WTC11 (cell line): ENCODE measurements at regions of chr14 and their contacts with region 1.

Region 1: GRCh38 chr14:77028384-77029231 is at the start of gene IRF2BPL:
- DNase-seq: peak; percentile 96
- ATAC-seq: peak; percentile 43
- H3K4me3 Mint-ChIP-seq: peak within 1 kb of the TSS; percentile 76
- H3K27ac Mint-ChIP-seq: peak within 1 kb of the TSS; percentile 98
- H3K4me1 Mint-ChIP-seq: peaks cover 52% of the 10 kb centered on the region
- H3K27me3 Mint-ChIP-seq: peaks cover 2% of the 10 kb centered on the region; the same call in 1 of the 2 replicates
- CTCF ChIP-seq: no peak
- total RNA-seq, gene IRF2BPL: 106 to 126 TPM (median 110 TPM) in 3 replicates

Region 2: DNA sequence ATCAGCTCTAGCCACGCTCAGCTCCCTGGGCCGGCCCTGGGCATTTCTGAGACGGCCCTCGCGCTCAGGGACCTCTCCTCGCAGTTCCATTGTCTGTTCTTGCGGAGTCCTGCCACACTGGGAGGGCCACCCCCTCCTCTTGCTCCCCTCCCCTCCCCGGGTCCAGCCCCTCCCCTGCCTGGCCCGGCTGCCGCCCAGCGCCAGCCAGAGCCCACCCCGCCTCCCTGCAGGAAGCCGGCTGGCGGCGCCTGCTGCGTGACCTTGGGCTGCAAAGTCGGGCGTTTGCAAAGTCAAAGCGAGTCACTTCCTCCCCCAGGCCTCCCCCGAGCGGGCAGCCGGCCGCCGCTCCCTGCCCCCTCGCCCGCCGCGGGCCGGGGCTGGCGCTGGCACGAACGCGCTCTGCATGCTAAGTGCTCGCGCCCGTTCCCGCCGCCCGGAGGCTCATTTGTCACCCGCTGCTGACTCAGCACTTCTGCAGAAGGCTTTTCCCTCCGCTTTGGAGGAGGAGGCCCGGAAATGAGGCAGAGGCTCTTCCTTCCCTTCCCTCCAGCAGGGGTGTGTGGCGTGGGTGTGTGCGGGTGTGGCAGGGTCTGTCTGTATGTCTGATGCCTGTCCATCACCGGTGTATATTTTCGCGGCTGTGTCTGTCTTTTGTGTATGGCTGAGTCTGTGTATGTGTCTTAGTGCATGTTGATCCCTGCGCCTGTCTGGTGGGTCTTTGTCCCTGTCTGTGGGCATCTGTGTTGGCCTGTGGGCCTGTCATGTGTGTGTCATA is 72.1 kb before region 1 on chr14:
- CTCF ChIA-PET with region 1: interaction called, 18 read pairs
- POLR2A ChIA-PET with region 1: interaction called, 45 read pairs
- DNase-seq: peak; percentile 92
- ATAC-seq: peak; percentile 71
- H3K4me3 Mint-ChIP-seq: peak overlapping the region; percentile 55
- H3K27ac Mint-ChIP-seq: peak overlapping the region; percentile 98
- H3K4me1 Mint-ChIP-seq: peaks cover 71% of the 10 kb centered on the region
- H3K27me3 Mint-ChIP-seq: no peaks in the 10 kb centered on the region
- CTCF ChIP-seq: no peak

Region 3: DNA sequence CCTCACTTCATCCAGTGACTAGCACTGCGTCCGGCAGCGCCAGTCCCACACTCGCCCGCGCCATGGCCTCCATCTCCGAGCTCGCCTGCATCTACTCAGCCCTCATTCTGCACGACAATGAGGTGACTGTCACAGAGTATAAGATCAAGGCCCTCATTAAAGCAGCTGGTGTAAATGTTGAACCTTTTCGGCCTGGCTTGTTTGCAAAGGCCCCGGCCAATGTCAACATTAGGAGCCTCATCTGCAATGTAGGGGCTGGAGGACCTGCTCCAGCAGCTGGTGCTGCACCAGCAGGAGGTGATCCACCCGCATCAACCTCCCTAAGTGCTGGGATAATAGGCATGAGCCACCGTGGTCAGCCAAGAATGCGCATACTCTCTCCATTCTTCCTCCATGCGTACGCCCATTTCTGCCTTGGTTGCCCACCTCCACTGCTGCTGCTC is 60.0 kb before region 1 on chr14:
- CTCF ChIA-PET with region 1: interaction called, 8 read pairs
- POLR2A ChIA-PET with region 1: interaction called, 45 read pairs
- DNase-seq: peak; percentile 61
- ATAC-seq: peak; percentile 76
- H3K4me3 Mint-ChIP-seq: peak overlapping the region; percentile 1
- H3K27ac Mint-ChIP-seq: peak overlapping the region; percentile 92
- H3K4me1 Mint-ChIP-seq: peaks cover 59% of the 10 kb centered on the region
- H3K27me3 Mint-ChIP-seq: no peaks in the 10 kb centered on the region
- CTCF ChIP-seq: no peak

Region 4: GRCh38 chr14:77040059-77040740 is 11.6 kb after region 1 on chr14:
- CTCF ChIA-PET with region 1: interaction called, 14 read pairs
- POLR2A ChIA-PET with region 1: interaction called, 16 read pairs
- DNase-seq: peak; percentile 78
- ATAC-seq: peak; percentile 51
- H3K4me3 Mint-ChIP-seq: peak overlapping the region; percentile 66
- H3K27ac Mint-ChIP-seq: peak overlapping the region; percentile 99
- H3K4me1 Mint-ChIP-seq: peaks cover 86% of the 10 kb centered on the region
- H3K27me3 Mint-ChIP-seq: peaks cover 7% of the 10 kb centered on the region
- CTCF ChIP-seq: no peak